ENCODE measurements at regions of chr18 and their contacts with region 1.

Region 1: DNA sequence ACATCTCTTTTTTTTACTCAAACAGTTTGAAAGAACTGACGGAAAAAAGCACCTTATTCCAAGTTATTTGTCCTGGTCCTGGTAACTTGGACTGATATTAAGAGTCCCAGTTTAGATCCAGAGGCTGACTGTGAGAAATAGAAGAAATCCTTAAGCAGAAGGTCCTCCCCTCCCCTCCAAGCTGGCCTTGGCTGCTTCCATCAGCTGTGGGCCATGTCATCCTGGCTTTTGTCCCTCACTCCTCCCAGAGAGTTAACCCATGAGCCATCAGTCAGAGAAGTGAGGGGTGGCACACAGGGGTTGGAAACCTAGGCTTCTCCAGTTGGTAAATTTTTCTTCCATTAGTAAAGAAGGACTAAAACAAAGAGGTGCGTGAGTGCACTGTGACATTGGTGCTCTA is 9.7 kb upstream of the NAPG start:
- DNase-seq: no peak
- H3K4me3 ChIP-seq: no peak overlapping the region
- H3K27ac ChIP-seq: peak overlapping the region in 2 of 4 donors; percentile 67 to 73
- H3K4me1 ChIP-seq: peaks cover 0 to 62% (median 32%) of the 10 kb centered on the region in 3 donors
- H3K27me3 ChIP-seq: no peaks in the 10 kb centered on the region
- CTCF ChIP-seq: no peak
- POLR2A ChIP-seq: no peak

Region 2: GRCh38 chr18:9971313-9971920 is 544.7 kb before region 1 on chr18:
- intact Hi-C with region 1: loop called (anchors 2 kb)
- DNase-seq: no peak
- H3K4me3 ChIP-seq: no peak overlapping the region
- H3K27ac ChIP-seq: no peak overlapping the region
- H3K4me1 ChIP-seq: peaks cover 0 to 13% (median 2%) of the 10 kb centered on the region in 3 donors
- H3K27me3 ChIP-seq: peaks cover 0 to 13% (median 0%) of the 10 kb centered on the region in 4 donors
- CTCF ChIP-seq: peak; percentile 66 to 90 (median 84)
- POLR2A ChIP-seq: no peak

Region 3: GRCh38 chr18:10822456-10822855 is 306.4 kb after region 1 on chr18:
- intact Hi-C with region 1: no loop called
- DNase-seq: no peak
- H3K4me3 ChIP-seq: no peak overlapping the region
- H3K27ac ChIP-seq: no peak overlapping the region
- H3K4me1 ChIP-seq: no peaks in the 10 kb centered on the region
- H3K27me3 ChIP-seq: no peaks in the 10 kb centered on the region
- CTCF ChIP-seq: no peak
- POLR2A ChIP-seq: no peak